Activated B cell treated with CpG ODN at 0.5 μM for 24 hours (primary cell): ENCODE measurements at regions of chr1 and their contacts with region 1.

Region 1: DNA sequence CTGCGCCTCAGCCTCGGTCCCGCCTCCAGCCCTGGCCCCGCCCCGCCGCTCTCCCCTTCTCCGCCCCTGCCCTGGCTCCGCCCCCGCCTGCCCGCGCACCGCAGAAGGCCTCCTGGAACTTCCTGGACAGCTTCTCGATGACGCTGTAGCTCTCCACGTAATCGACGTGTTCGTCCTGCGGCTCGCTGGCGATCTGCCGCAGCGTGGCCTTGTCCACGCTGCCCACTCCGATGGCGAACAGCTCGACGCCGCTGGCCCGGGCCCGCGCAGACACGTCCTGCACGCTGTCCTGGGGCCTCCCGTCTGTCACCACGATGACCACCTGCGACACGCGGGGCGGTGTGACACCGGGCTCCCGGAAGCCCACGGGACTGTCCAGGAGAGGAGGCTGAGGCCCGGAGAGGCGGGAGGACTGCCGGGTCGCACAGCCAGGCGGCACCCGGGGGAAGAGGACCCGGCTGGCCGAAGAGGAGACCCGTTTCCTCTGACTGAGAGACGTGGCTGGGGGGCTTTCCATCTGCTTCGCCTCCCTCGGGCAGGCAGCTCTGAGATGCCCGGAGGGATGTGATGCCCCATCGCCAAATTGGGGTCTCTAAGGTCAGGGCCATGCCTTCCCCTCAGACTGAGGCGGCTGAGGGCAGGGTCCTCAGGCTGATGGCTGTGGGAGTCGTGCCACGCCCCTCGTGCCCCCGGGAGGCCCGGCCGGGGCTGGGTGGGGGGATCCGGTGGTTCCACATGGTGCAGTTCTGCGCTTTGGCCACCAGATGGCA is 4.6 kb downstream of the MATN1 start:
- DNase-seq: peak; percentile 87
- ATAC-seq: peak; percentile 66
- H3K4me3 Mint-ChIP-seq: peak overlapping the region; percentile 87
- H3K27ac Mint-ChIP-seq: peak overlapping the region; percentile 91
- H3K4me1 Mint-ChIP-seq: peaks cover 42% of the 10 kb centered on the region
- H3K27me3 Mint-ChIP-seq: no peaks in the 10 kb centered on the region
- CTCF ChIP-seq: peak; percentile 92

Region 2: DNA sequence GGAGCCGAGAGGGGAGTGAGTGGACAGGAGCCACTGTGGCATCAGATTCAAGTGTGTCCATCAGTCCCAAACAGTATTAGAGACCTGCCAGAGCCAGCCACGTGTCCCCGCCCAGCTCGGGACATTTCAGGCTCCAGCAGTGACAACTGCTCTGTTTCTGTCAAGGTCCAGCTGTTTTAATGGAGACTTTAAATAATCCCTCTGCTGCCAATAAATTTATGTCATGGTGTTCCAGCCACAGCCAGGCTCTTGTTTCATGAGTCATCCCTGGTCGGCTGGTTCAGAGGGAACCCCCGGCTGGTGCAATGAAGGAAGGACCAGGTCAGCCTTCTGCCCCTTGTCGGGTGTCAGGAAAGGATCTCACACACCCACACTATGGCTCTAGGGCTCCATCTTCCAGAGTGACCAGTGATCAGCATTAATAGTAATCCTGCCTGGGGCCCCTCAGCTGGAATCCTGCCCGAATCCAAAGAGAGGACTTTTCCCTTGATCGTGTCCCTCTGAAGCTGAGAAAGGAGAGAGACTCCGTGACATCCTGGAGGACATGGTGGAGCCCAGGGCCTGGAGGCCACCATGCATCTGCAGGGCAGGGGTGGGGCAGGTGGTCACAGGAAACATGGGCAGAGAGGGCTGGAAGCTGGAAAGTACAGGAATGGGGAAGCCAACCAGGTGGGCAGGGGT is 192.7 kb before region 1 on chr1:
- CTCF ChIA-PET with region 1: no interaction called
- POLR2A ChIA-PET with region 1: no interaction called
- intact Hi-C with region 1: no loop called
- DNase-seq: no peak
- ATAC-seq: no peak
- H3K4me3 Mint-ChIP-seq: no peak overlapping the region
- H3K27ac Mint-ChIP-seq: no peak overlapping the region
- H3K4me1 Mint-ChIP-seq: no peaks in the 10 kb centered on the region
- H3K27me3 Mint-ChIP-seq: peaks cover 22% of the 10 kb centered on the region
- CTCF ChIP-seq: no peak

Region 3: GRCh38 chr1:30732277-30732996 is 13.6 kb after region 1 on chr1:
- CTCF ChIA-PET with region 1: interaction called, 45 read pairs
- POLR2A ChIA-PET with region 1: interaction called, 90 read pairs
- intact Hi-C with region 1: no loop called
- DNase-seq: no peak
- ATAC-seq: peak; percentile 57
- H3K4me3 Mint-ChIP-seq: no peak overlapping the region
- H3K27ac Mint-ChIP-seq: peak overlapping the region; percentile 70
- H3K4me1 Mint-ChIP-seq: peaks cover 72% of the 10 kb centered on the region
- H3K27me3 Mint-ChIP-seq: no peaks in the 10 kb centered on the region
- CTCF ChIP-seq: no peak

Region 4: DNA sequence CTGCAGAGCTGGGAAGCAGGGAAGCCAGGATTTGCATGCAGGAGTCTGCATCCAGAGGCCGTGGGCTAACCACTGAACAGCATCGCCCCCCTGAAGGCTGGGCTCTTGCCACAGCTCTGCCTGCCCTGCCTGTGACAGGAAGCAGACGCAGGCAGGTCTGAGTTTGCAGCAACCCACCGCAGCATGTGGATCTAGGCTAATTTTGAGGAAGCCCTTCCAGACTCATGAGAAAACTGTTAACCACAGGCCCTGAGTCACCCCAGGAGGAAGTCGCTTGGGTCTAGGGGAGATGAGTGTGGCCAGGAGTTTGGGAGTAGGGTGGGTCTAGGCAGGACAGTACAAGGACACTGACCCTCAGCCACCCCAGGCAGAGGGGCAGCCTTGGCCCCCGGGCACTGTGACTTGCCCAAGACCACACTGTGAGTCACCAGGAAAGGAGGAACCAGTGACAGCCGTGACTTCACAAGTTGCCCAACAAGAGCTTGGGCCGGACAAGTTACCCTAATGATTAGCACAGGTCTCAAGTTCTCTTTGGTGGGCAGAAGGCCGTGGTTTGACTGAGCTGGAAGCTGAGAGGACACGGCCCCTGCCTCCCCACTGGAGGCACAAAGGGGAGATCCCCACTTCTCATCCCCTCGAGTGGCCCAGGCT is 37.8 kb after region 1 on chr1:
- CTCF ChIA-PET with region 1: interaction called, 26 read pairs
- POLR2A ChIA-PET with region 1: interaction called, 662 read pairs
- intact Hi-C with region 1: loop called (anchors 1 kb)
- DNase-seq: peak; percentile 65
- ATAC-seq: peak; percentile 35
- H3K4me3 Mint-ChIP-seq: peak overlapping the region; percentile 99
- H3K27ac Mint-ChIP-seq: peak overlapping the region; percentile 96
- H3K4me1 Mint-ChIP-seq: peaks cover 89% of the 10 kb centered on the region
- H3K27me3 Mint-ChIP-seq: no peaks in the 10 kb centered on the region
- CTCF ChIP-seq: no peak

Region 5: DNA sequence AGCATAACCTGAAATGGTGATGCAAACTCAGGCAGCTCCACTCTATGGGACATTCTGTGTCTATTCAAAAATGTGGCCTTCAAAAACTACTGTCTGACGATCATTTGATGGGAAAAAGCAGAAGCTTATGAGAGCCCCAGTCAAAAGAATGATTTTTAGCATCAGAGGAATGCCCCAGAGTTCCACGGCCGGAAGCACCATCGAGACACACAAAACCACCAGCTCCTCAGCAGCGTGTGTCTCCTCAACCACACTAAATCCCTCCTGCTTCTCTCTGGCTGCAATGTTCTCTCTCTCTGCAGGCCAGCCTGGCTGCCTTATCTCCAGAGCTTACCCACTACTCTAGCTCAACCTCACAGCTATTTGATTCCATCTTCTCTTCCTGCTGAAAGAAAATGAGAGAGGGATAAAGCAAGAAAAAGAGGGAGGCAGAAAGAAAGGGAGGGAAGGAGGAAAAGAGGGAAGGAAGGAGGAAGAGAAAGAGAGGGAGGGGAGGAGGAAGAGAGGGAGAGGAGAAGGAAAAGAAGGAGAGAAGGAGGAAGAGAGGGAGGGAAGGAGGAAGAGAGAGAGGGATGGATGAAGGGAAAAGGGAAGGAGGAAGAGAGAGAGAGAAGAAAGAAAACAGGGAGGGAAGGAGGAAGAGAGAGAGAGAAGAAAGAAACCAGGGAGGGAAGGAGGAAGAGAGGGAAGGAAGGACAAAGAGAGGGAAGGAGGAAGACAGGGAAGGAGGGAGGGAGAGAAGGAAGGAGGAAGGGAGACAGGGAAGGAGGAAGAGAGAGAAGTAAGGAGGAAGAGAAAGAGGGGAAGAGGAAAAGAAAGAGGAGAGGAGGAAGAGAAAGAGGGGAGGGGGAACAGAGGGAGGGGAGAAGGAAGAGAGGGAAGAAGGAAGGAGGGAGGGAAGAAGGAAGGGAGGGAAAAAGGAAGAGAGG is 72.3 kb after region 1 on chr1:
- CTCF ChIA-PET with region 1: interaction called, 5 read pairs
- POLR2A ChIA-PET with region 1: interaction called, 14 read pairs
- intact Hi-C with region 1: no loop called
- DNase-seq: no peak
- ATAC-seq: peak; percentile 82
- H3K4me3 Mint-ChIP-seq: peak overlapping the region; percentile 58
- H3K27ac Mint-ChIP-seq: peak overlapping the region; percentile 72
- H3K4me1 Mint-ChIP-seq: peaks cover 31% of the 10 kb centered on the region
- H3K27me3 Mint-ChIP-seq: peaks cover 12% of the 10 kb centered on the region
- CTCF ChIP-seq: no peak

Region 6: GRCh38 chr1:30929135-30929889 is 210.5 kb after region 1 on chr1:
- CTCF ChIA-PET with region 1: interaction called, 14 read pairs
- POLR2A ChIA-PET with region 1: no interaction called
- intact Hi-C with region 1: loop called (anchors 1 kb)
- DNase-seq: no peak
- ATAC-seq: peak; percentile 56
- H3K4me3 Mint-ChIP-seq: no peak overlapping the region
- H3K27ac Mint-ChIP-seq: no peak overlapping the region
- H3K4me1 Mint-ChIP-seq: peaks cover 14% of the 10 kb centered on the region
- H3K27me3 Mint-ChIP-seq: no peaks in the 10 kb centered on the region
- CTCF ChIP-seq: peak; percentile 76

Region 7: GRCh38 chr1:31422505-31423319 is 703.9 kb after region 1 on chr1:
- CTCF ChIA-PET with region 1: no interaction called
- POLR2A ChIA-PET with region 1: no interaction called
- intact Hi-C with region 1: loop called (anchors 1 kb)
- DNase-seq: peak; percentile 70
- ATAC-seq: peak; percentile 53
- H3K4me3 Mint-ChIP-seq: peak overlapping the region; percentile 58
- H3K27ac Mint-ChIP-seq: peak overlapping the region; percentile 73
- H3K4me1 Mint-ChIP-seq: peaks cover 25% of the 10 kb centered on the region
- H3K27me3 Mint-ChIP-seq: no peaks in the 10 kb centered on the region
- CTCF ChIP-seq: peak; percentile 78